Activated CD8-positive, alpha-beta memory T cell treated with anti-CD3 and anti-CD28 coated beads, Interleukin-2, amount 10 ng/mL, durations not matched to agents 7 days and 5 days (primary cell): ENCODE measurements at regions of chr2 and their contacts with region 1.

Region 1: DNA sequence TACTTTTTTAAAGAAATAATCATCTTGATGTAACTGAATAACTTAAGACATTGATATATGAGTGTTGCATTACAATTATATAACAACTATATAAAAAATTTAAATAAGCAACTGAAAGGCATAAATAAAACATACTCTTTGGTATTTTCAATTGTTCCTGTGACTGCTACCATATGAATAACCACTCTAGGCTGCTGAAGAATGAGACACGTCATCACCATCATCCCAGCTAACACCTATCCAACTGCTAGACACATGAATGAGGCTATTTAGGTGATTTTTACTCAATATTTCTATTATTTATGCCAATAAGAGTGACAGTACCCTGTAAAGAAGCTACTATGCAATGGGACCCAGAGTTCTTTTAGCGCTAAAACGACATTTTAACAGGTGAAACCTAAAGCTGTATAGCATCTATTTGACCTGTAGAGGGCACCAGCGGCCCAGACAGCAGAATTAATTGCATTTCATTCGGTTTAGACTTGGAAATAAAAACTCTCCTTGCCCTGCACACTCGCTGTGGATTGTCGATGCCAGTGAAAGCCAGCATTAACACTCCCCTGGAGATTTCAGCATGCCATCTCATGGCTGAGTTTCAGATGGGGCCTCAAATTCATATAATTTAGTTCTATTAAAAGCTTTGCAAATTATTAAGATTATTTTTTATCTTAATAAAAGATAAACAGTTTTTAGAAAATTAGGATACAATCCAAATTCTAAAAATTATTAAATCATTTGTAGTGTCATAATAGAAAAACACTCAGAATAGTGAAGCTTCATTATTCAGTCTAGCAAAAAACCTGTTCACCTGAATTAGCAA is 89.4 kb upstream of the MAP2 start:
- DNase-seq: peak; percentile 42
- ATAC-seq: no peak
- H3K4me3 Mint-ChIP-seq: no peak overlapping the region
- H3K27ac Mint-ChIP-seq: no peak overlapping the region
- H3K4me1 Mint-ChIP-seq: no peaks in the 10 kb centered on the region
- H3K27me3 Mint-ChIP-seq: no peaks in the 10 kb centered on the region

Region 2: DNA sequence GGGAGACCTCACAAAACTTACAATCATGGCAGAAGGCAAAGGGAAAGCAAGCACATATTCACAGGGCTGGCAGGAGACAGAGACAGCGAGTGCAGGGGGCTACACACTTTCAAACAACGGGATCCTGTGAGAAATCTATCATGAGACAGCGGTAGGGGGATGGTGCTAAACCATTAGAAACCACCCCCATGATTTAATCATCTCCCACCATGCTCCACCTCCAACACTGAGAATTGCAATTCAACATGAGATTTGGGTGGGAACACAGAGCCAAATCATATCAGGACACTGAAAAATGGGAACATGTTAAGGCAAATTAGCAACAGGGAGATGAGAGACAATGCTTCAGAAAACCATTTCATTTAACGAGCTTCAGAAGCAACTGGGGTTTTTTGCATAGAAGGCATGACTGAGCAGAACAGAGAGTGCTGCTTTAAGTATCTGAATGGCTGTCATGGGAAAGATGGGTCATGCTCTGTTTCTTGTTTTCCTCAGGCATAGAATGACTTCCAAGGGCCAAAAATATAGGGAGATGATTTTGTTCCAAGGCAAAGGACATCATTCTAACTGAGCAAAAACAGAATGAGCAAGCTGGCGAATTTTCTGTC is 11.4 kb before region 1 on chr2:
- CTCF ChIA-PET with region 1: interaction called, 12 read pairs
- DNase-seq: no peak
- ATAC-seq: no peak
- H3K4me3 Mint-ChIP-seq: no peak overlapping the region
- H3K27ac Mint-ChIP-seq: no peak overlapping the region
- H3K4me1 Mint-ChIP-seq: no peaks in the 10 kb centered on the region
- H3K27me3 Mint-ChIP-seq: no peaks in the 10 kb centered on the region

Region 3: GRCh38 chr2:209960676-209961630 is 626.5 kb after region 1 on chr2:
- CTCF ChIA-PET with region 1: interaction called, 10 read pairs
- DNase-seq: peak; percentile 49
- ATAC-seq: peak; percentile 51
- H3K4me3 Mint-ChIP-seq: no peak overlapping the region
- H3K27ac Mint-ChIP-seq: no peak overlapping the region
- H3K4me1 Mint-ChIP-seq: no peaks in the 10 kb centered on the region
- H3K27me3 Mint-ChIP-seq: peaks cover 10% of the 10 kb centered on the region